PC-9 (cell line): ENCODE measurements at regions of chr6 and their contacts with region 1.

Region 1: DNA sequence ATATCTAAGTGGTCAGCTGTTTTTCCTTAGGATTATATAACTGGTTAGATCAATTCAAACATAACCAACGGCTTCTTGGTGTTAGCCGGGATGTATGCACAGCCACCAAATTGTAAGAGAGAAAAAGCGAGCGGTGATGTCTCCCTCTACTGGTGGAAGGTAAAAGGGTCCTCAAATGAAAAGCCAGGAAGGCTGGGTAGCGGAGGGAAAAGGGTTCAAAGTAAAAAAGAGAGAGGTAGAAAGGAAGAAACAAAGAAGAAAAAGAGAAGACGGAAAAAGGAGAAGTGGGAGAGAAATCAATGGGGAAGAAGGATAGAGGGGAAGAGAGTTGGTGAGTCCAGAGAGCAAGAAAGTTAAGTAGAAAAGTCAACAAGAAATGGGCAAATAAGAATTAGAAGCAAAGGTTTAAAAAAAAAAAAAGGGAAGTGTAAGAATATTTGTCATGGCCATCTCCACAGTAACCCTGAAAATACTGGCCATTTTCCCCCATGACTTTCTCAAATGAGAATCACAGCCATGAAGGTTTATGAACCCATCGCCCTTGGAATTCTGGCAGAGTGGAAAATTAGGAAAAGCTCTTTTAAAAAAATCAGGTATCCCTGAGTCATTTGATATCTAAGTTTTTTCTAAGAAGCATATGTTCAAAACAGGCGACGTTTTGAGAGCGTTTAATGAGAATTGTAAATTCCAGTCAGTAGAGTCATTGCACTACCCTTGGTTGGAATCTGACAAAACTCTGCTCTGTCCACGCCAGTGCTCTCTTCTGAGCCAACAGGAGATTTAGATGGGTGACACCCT is 155.6 kb upstream of the SNX9 start:
- DNase-seq: peak; percentile 25 to 41
- H3K4me3 ChIP-seq: no peak overlapping the region
- H3K27ac ChIP-seq: no peak overlapping the region
- H3K4me1 ChIP-seq: no peaks in the 10 kb centered on the region
- H3K27me3 ChIP-seq: no peaks in the 10 kb centered on the region
- CTCF ChIP-seq: peak; percentile 93

Region 2: DNA sequence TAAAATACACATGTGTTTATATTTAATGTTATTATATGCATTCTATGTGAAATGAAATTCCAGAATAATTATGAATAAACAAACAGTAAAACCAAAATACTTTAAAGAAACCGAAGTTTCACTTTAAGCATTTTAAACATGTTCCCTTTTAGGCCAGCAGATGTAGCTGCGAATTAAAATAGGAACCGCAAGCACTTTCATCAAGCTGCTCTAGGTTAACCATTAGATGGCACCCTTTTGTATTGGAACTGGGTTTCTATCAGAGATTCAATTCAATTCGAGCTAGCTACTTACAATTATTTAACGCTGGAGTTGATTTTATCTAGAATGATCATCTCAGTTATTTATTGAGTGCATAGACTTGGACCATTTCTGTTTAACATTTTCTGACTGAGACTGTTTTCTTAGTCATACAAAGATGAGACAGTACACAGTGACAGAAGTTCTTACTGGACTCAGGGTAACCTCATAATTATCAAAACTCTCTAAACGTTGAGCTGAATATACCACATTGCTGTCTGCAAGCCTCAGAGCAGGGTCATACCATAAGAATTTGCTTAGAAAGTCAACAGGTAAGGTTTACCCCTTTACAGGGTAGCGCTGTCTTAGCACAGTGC is 352.6 kb before region 1 on chr6:
- CTCF ChIA-PET with region 1: interaction called, 5 read pairs
- POLR2A ChIA-PET with region 1: no interaction called
- intact Hi-C with region 1: loop called (anchors 1 kb)
- DNase-seq: peak in 1 of 2 experiments; percentile 66
- H3K4me3 ChIP-seq: no peak overlapping the region
- H3K27ac ChIP-seq: no peak overlapping the region
- H3K4me1 ChIP-seq: peaks cover 14% of the 10 kb centered on the region
- H3K27me3 ChIP-seq: no peaks in the 10 kb centered on the region
- CTCF ChIP-seq: peak; percentile 81

Region 3: DNA sequence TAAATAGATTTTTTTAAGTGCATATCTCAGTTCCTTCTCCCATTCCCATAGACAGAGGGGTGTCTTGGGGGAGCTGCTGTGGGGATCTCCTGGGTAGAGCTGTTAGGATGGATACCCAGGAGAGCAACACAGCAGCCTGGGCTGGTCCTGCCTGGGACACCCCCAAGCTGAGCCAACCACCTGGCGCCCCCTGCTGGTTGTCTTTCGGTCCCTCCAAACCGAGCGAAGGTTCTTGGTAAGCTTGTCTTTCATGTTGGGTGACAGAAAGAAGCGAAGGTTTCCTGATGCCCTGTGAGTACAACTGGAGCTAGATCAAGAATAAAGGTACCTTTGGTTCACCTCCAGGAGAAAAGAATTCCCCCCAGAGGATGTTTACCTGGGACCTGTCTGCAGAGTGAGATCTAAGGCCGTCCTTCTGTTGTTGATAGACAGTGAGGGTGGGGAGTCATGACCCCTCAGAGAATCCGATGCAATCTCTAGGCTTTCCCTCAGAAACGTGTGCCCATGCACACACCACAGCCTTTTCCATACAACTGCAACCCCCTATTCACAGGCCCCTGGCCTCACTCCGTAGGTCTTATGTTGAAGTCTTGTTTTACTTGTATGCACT is 206.4 kb after region 1 on chr6:
- CTCF ChIA-PET with region 1: no interaction called
- POLR2A ChIA-PET with region 1: no interaction called
- intact Hi-C with region 1: loop called (anchors 10 kb)
- DNase-seq: peak; percentile 59 to 65
- H3K4me3 ChIP-seq: no peak overlapping the region
- H3K27ac ChIP-seq: no peak overlapping the region
- H3K4me1 ChIP-seq: no peaks in the 10 kb centered on the region
- H3K27me3 ChIP-seq: no peaks in the 10 kb centered on the region
- CTCF ChIP-seq: peak; percentile 87